Adrenal gland (tissue), 19 donors: ENCODE measurements at regions of chr11 and their contacts with region 1.

Region 1: GRCh38 chr11:101436511-101437142 is 147.2 kb downstream of the TRPC6 start:
- DNase-seq: peak in 5 of 7 donors; percentile 39 to 66 (median 57)
- H3K4me3 ChIP-seq: no peak overlapping the region
- H3K27ac ChIP-seq: no peak overlapping the region
- H3K4me1 ChIP-seq: peaks cover 3 to 4% of the 10 kb centered on the region in 2 donors
- H3K27me3 ChIP-seq: no peaks in the 10 kb centered on the region
- CTCF ChIP-seq: peak; percentile 44 to 60 (median 56)
- POLR2A ChIP-seq: no peak

Region 2: DNA sequence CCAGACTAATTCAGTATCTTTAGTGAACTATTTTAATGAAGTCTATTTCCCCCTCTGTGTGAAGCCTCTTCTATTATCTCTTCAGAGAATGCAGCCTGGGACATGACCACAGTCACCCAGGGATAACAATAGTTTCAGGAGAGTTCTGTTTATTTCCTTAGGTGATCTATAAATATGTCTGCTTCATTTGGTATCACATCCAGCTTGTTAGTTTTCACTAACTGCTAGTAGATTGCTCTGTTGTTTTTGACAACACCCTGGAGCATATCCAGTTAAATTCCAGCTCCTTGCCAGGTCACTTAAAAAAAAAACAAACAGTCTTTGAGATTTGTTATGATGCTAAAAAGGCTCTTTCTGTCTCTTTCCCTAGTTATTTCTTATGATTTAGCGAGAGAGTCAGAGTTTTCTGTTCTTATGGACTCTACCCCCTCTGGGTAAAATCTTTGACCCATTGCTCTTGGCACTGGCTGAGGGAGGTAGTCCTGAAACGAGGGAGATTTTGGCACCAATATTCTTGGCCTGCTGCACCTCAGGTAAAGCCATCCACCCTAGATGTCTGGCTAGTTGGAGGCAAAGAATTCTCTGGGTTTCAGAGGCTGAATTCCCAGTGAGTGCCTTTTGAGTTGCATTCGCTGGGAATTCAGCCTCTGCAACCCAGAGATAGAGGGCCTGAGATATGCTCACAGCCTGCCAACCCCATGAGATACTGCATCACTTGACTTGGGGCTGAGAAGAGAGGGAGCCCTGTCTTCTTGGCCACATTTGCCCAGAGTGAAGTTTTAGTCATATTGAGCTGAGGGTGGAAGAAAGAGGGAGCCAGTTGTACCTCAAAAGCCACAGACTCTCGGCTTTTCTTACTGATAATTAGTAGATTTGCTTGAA is 466.1 kb before region 1 on chr11:
- intact Hi-C with region 1: loop called (anchors 5 to 10 kb)
- DNase-seq: no peak
- H3K4me3 ChIP-seq: no peak overlapping the region
- H3K27ac ChIP-seq: no peak overlapping the region
- H3K4me1 ChIP-seq: no peaks in the 10 kb centered on the region
- H3K27me3 ChIP-seq: no peaks in the 10 kb centered on the region
- CTCF ChIP-seq: no peak
- POLR2A ChIP-seq: no peak

Region 3: DNA sequence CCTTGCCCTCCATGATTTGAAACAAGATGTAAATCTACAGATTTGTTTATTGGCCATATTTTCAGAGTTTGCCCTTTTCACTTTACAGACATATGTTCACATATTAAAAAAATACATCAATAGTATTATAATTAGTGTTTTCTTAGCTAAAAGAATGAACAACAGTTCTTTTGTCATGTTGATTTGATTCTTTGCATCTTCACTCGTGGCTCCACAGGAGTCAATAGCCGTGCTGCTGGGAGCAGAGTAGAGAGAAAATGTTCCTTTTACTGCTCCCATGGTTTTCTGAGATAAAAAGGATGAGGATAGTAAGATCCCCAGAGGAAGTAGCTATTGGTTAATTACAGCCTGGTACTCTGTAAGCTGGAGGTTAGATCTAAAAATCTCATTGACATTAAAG is 458.2 kb before region 1 on chr11:
- intact Hi-C with region 1: loop called (anchors 5 to 10 kb)
- DNase-seq: no peak
- H3K4me3 ChIP-seq: no peak overlapping the region
- H3K27ac ChIP-seq: no peak overlapping the region
- H3K4me1 ChIP-seq: no peaks in the 10 kb centered on the region
- H3K27me3 ChIP-seq: no peaks in the 10 kb centered on the region
- CTCF ChIP-seq: no peak
- POLR2A ChIP-seq: no peak